HEK293 (cell line): ENCODE measurements at regions of chr18 and their contacts with region 1.

Region 1: DNA sequence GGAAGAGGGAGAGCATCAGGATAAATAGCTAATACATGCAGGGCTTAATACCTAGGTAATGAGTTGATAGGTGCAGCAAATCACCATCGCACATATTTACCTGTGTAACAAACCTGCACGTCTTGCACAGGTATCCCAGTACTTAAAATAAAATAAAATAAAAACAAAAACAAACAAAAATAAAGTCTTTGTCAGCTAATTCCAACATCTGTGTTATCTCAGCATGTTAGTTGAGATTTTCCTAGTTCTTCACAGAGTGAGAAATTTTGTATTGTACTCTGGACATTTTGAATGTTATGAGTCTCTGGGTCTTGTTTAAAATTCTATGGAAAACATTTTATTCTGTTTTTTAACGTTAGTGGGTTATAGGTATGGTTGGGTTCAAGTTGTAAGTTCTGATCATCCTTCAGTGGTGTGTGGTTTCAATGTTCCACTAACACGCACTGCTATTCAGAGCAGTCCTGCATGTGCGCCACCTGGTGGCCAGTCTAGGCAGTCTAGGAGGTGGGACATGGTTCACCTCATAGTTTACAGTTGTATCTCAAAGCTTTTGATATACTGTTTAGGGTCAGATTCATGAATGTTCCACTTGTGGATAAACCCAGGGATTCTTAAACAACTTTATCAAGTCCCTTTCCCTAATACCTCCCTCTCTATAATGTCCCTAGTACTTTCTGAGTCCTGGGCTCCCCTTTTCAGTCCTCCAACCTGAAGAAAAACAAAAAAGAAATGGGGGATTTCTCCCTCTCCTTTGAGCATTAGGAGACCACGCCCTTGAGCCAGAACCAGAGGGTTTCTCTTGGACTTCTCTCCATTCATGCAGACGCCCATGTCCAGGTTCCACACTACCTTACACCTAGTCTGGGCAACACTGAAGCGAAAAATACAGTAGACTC is 213.4 kb upstream of the GATA6 start:
- H3K4me3 ChIP-seq: no peak overlapping the region
- H3K27ac ChIP-seq: no peak overlapping the region
- H3K4me1 ChIP-seq: no peaks in the 10 kb centered on the region
- CTCF ChIP-seq: peak; percentile 65

Region 2: DNA sequence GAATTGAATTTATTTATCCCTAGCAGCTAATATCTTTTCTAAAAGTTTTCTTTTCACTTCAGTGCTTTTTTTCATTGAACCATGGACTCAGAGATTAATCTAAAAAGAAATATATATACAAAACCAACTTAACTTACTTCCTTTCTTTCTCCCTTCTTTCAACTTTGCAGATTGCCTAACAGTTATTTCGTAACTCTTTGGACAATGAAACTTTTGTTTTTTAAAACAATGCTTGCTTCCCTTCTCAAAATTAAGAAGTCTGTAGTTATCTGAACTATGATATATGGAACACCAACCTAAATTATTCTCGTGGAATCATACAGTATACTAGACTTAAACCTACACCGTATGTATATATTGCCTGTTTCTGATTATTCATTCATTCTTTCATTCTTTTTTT is 152.5 kb before region 1 on chr18:
- CTCF ChIA-PET with region 1: no interaction called
- POLR2A ChIA-PET with region 1: no interaction called
- H3K4me3 ChIP-seq: no peak overlapping the region
- H3K27ac ChIP-seq: no peak overlapping the region
- H3K4me1 ChIP-seq: no peaks in the 10 kb centered on the region
- CTCF ChIP-seq: no peak

Region 3: DNA sequence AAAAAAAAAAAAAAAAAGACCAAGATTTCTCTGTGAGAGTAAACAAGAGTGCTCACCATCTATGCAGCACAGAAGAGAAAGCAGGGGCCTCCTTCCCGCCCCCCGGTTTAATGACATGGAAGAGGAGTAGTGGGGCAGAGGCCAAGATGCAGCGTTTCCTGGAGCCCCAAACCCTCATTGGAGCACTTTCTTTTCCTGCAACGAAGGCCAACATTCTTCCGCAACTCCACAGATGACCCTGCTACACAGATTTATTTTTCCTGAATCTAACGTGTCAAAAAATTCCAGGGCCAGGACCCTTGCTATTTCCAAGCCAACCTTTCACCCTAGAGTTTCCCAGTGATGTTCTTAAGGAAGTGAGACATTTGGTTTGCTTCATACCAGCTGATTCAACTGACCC is 25.8 kb before region 1 on chr18:
- CTCF ChIA-PET with region 1: interaction called, 11 read pairs
- POLR2A ChIA-PET with region 1: no interaction called
- H3K4me3 ChIP-seq: no peak overlapping the region
- H3K27ac ChIP-seq: no peak overlapping the region
- H3K4me1 ChIP-seq: no peaks in the 10 kb centered on the region
- CTCF ChIP-seq: no peak